Transverse colon (tissue), 4 donors: ENCODE measurements at regions of chr10 and their contacts with region 1.

Region 1: DNA sequence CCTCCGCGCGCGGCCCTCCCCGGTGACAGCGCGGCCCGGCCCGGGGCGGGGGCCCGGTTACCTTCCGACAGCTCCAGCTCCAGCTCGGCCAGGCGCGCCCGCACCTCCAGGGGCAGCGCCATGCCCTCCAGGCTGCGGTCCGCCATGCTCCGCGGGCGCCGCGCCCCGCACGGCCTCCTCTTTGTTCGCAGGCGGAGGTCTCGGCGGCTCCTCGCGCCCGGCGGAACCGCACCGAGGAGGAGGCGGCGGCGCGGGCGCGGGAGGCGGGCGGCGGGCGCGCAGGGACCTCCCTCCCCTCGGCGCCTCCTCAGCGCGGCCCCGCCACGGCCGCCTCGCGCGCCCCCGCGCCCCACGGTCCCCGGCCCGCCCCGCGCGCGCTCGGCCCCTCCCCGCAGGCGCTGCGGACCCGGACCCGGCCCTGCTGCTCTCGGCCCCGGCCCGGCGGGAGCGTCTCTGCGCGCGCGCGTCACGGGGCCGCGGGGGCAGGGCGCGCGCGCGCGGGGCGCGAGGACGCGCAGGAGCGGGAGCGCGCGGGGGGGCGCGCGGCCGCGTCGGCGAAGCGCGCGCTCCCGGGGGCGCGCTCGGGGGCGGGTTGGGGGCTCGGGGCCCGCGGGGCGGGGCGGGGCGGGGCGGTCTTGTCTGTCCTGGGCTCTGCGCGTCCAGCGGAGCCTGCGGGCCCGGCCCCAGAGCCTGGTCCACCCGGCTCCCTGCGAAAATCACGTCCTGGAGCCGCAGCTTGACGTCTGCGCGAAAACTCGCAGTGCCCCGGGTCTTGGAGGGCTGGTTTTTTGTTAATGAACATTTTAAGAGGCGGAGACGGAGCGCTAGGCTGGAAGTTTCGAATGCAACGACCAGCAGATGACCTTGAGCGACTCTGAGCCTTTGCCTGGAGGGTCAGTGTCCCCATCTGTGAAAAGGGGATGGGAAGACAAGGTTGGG is at the start of gene DIP2C:
- DNase-seq: peak; percentile 67
- H3K4me3 ChIP-seq: peak within 1 kb of the TSS; percentile 67 to 92 (median 83)
- H3K27ac ChIP-seq: peak within 1 kb of the TSS; percentile 85 to 93 (median 90)
- H3K4me1 ChIP-seq: peaks cover 0 to 25% (median 10%) of the 10 kb centered on the region in 4 donors
- H3K27me3 ChIP-seq: no peaks in the 10 kb centered on the region
- CTCF ChIP-seq: no peak
- EP300 ChIP-seq: no peak
- POLR2A ChIP-seq: no peak
- total RNA-seq, gene DIP2C: 13.4 to 32.0 (median 18.4) TPM

Region 2: GRCh38 chr10:490891-491581 is 198.7 kb before region 1 on chr10:
- in situ Hi-C with region 1: no loop called
- intact Hi-C with region 1: loop called (anchors 5 kb)
- DNase-seq: peak; percentile 28
- H3K4me3 ChIP-seq: no peak overlapping the region
- H3K27ac ChIP-seq: peak overlapping the region; percentile 73 to 90 (median 82)
- H3K4me1 ChIP-seq: peaks cover 14 to 51% (median 16%) of the 10 kb centered on the region in 4 donors
- H3K27me3 ChIP-seq: no peaks in the 10 kb centered on the region
- CTCF ChIP-seq: no peak
- EP300 ChIP-seq: no peak
- POLR2A ChIP-seq: no peak

Region 3: GRCh38 chr10:511101-511848 is 178.4 kb before region 1 on chr10:
- in situ Hi-C with region 1: loop called in 1 of 4 experiments (anchors 25 kb)
- intact Hi-C with region 1: loop called (anchors 5 kb)
- DNase-seq: peak; percentile 92
- H3K4me3 ChIP-seq: no peak overlapping the region
- H3K27ac ChIP-seq: peak overlapping the region; percentile 21 to 74 (median 58)
- H3K4me1 ChIP-seq: peaks cover 4 to 23% (median 17%) of the 10 kb centered on the region in 4 donors
- H3K27me3 ChIP-seq: no peaks in the 10 kb centered on the region
- CTCF ChIP-seq: peak; percentile 95 to 97 (median 96)
- EP300 ChIP-seq: no peak
- POLR2A ChIP-seq: no peak